ENCODE measurements at regions of chr7 and their contacts with region 1.

Region 1: DNA sequence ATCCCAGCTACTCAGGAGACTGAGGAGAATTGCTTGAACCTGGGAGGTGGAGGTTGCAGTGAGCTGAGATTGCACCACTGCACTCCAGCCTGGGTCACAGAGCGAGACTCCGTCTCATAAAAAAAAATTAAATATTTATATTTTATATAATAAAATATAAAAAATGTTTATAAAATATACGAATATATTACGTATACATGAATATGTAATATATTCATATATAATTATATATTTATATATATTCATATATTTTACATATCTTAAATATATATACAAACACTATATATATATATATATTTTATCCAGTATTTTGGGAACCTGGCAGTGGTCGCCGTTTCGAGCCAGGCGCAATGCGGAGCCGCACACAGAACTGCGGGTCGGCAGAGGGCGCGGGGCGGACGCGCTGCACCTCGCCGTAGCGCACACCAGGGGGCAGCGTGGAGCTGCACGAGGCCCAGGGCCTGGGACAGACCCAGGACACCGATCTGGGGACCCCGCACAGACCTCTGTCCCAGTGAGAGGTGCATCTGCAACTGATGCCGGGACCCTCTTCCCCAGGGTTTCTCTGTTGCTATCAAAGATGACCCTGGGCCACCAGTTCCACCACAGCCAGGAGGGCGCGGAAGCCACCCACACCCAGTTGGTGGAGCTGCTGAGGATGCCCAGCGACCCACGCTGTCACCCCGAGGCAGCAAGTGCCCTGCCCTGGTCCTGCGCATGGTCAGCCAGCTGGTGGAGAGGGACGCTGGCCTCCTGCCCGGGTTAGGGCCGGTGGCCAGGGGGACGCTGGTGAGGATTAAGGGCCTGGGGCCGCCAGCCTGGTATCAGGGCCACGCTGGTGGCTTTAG is 22.7 kb downstream of the AP5Z1 start:
- DNase-seq: peak; percentile 55
- H3K4me3 ChIP-seq: no peak overlapping the region
- H3K27ac ChIP-seq: peak overlapping the region; percentile 57
- H3K4me1 ChIP-seq: peaks cover 25% of the 10 kb centered on the region
- H3K27me3 ChIP-seq: no peaks in the 10 kb centered on the region
- CTCF ChIP-seq: peak; percentile 89

Region 2: GRCh38 chr7:4486907-4487306 is 311.2 kb before region 1 on chr7:
- intact Hi-C with region 1: no loop called
- DNase-seq: no peak
- H3K4me3 ChIP-seq: no peak overlapping the region
- H3K27ac ChIP-seq: no peak overlapping the region
- H3K4me1 ChIP-seq: no peaks in the 10 kb centered on the region
- H3K27me3 ChIP-seq: peaks cover 38% of the 10 kb centered on the region
- CTCF ChIP-seq: no peak

Region 3: DNA sequence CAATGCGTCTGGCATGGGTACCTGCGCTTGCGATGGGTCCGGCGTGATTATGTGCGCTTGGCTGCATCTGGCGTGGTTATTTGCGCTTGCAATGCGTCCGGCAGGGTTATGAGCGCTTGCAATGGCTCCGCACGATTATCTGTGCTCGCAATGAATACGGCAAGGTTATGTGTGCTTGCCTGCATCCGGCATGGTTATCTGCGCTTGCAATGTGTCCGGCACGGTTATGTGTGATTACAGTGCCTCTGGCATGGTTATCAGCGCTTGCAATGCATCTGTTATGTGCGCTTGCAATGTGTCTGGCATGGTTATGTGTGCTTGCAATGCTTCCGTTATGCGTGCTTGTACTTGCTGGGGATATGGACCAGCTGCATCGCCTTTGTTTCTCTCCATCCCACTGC is 285.2 kb after region 1 on chr7:
- intact Hi-C with region 1: loop called (anchors 10 kb)
- DNase-seq: no peak
- H3K4me3 ChIP-seq: no peak overlapping the region
- H3K27ac ChIP-seq: no peak overlapping the region
- H3K4me1 ChIP-seq: peaks cover 4% of the 10 kb centered on the region
- H3K27me3 ChIP-seq: peaks cover 64% of the 10 kb centered on the region
- CTCF ChIP-seq: no peak

Measured in left ventricle myocardium inferior (tissue), 1 donor.